ENCODE measurements at regions of chr19 and their contacts with region 1.

Region 1: GRCh38 chr19:13277104-13277809 is 127.0 kb downstream of the IER2 start:
- DNase-seq: peak; percentile 79
- CTCF ChIP-seq: peak; percentile 62

Region 2: GRCh38 chr19:13262450-13262849 is 14.8 kb before region 1 on chr19:
- CTCF ChIA-PET with region 1: interaction called, 22 read pairs
- POLR2A ChIA-PET with region 1: no interaction called
- DNase-seq: peak; percentile 65
- CTCF ChIP-seq: peak; percentile 52

Region 3: DNA sequence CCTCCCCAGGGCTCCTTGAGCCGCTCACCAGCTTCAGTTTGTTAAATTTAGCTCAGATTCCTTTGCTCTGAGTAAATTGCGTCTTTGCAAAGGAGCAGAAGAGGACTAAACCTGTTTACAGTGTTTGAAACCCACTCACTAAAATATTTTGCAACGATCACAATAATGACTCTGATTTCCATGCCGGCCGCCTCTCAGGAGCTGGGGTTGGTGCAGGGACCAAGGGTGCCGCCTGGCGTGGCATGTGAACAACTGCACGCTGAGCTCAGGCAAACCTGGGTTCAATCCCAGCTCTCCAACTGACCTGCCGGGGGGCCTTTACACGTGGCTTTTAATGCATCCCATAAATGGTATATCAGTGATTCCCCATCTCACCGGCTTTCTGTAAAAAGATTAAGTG is 297.7 kb after region 1 on chr19:
- CTCF ChIA-PET with region 1: interaction called, 15 read pairs
- POLR2A ChIA-PET with region 1: no interaction called
- DNase-seq: no peak
- CTCF ChIP-seq: peak; percentile 33

Region 4: GRCh38 chr19:13583114-13583513 is 305.9 kb after region 1 on chr19:
- CTCF ChIA-PET with region 1: interaction called, 61 read pairs
- POLR2A ChIA-PET with region 1: no interaction called
- DNase-seq: no peak
- CTCF ChIP-seq: no peak

Region 5: DNA sequence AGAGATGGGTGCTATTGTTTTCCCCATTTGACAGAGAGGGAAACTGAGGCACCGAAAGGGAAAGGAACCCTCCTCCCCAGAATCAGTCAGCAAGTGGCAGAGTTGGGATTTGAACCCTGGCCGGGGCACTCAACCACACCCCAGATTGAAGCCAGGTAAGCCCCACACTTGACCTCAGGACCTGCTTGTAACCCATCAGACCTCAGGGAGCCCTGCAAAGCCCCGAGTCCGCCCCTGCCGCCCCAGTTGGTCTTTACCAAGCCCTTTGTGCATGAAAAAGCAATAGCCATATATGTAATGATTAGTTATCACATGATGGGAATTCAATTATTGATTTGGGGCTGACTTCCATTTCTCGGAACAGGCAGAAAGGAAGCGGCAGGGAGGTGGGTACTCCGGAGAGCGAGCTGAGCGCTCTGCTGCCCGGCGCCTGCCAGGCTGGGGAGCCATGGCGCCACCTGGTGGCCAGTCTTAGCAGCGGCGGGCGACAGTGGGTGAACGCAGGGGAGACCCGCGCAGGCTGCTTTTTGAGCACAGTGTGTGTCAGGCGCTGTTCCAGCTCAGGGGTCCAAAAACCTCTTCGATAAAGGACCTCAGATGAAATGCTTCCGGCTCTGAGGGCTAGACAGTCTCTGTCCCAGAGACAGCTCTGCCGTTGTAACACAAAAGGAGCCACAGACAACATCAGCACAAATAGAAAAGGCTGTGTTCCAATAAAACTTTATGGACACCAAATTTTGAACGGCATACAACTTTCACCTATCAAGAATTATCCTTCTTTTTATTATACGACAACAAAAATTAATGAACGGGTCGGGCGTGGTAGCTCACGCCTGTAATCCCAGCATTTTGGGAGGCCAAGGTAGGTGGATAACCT is 311.9 kb after region 1 on chr19:
- CTCF ChIA-PET with region 1: interaction called, 61 read pairs
- POLR2A ChIA-PET with region 1: no interaction called
- DNase-seq: peak; percentile 85
- CTCF ChIP-seq: peak; percentile 94